ENCODE measurements at regions of chr6 and their contacts with region 1.

Region 1: DNA sequence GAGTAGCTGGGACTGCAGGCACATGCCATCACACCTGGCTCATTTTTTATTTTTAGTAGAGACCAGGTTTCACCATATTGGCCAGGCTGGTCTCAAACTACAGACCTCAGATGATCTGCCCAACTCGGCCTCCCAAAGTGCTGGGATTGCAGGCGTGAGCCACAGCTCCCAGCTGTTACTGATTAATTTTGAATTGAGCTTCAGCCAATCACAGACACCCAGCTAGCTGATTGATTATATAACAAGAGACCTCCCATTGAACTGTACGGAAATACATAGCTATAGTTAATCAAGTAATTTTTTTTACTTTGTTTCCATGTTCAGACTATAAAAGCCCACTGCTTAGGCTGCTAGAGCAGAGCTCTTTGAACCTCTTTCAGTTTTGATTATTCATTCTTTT is 31.6 kb downstream of the PKIB start:
- DNase-seq: no peak
- ATAC-seq: no peak
- H3K4me3 ChIP-seq: no peak overlapping the region
- H3K27ac ChIP-seq: no peak overlapping the region
- H3K4me1 ChIP-seq: no peaks in the 10 kb centered on the region
- H3K27me3 ChIP-seq: no peaks in the 10 kb centered on the region
- CTCF ChIP-seq: no peak
- EP300 ChIP-seq: no peak
- POLR2A ChIP-seq: no peak
- RAD21 ChIP-seq: no peak

Region 2: GRCh38 chr6:122068291-122068769 is 573.5 kb before region 1 on chr6:
- CTCF ChIA-PET with region 1: no interaction called
- POLR2A ChIA-PET with region 1: no interaction called
- RAD21 ChIA-PET with region 1: no interaction called
- SMC1A ChIA-PET with region 1: no interaction called
- in situ Hi-C with region 1: no loop called
- intact Hi-C with region 1: no loop called
- DNase-seq: no peak
- ATAC-seq: no peak
- H3K4me3 ChIP-seq: no peak overlapping the region
- H3K27ac ChIP-seq: no peak overlapping the region
- H3K4me1 ChIP-seq: no peaks in the 10 kb centered on the region
- H3K27me3 ChIP-seq: no peaks in the 10 kb centered on the region
- CTCF ChIP-seq: no peak
- EP300 ChIP-seq: no peak
- POLR2A ChIP-seq: no peak
- RAD21 ChIP-seq: no peak

Region 3: DNA sequence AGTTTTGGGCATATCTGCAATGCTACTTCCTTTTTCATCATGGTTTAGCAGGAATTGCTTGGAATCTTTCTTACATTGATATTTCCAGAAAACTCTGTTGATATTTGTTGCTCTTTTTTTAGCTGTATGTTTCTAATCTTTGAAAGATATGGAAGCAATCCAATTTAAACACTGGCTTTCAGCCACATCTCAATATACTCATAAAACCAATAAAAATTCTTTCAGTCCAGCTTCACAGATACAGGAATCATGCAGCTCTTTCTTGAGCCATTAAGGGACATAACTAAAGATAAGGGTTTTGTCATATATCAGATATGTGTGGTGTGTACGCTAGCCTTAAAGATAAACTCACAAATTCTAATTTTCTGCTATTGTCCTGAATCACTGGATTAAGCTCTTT is 15.8 kb after region 1 on chr6:
- CTCF ChIA-PET with region 1: interaction called, 5 read pairs
- POLR2A ChIA-PET with region 1: no interaction called
- RAD21 ChIA-PET with region 1: no interaction called
- SMC1A ChIA-PET with region 1: interaction called, 19 read pairs
- in situ Hi-C with region 1: no loop called
- intact Hi-C with region 1: no loop called
- DNase-seq: no peak
- ATAC-seq: no peak
- H3K4me3 ChIP-seq: no peak overlapping the region
- H3K27ac ChIP-seq: no peak overlapping the region
- H3K4me1 ChIP-seq: no peaks in the 10 kb centered on the region
- H3K27me3 ChIP-seq: no peaks in the 10 kb centered on the region
- CTCF ChIP-seq: no peak
- EP300 ChIP-seq: no peak
- POLR2A ChIP-seq: no peak
- RAD21 ChIP-seq: no peak

Region 4: DNA sequence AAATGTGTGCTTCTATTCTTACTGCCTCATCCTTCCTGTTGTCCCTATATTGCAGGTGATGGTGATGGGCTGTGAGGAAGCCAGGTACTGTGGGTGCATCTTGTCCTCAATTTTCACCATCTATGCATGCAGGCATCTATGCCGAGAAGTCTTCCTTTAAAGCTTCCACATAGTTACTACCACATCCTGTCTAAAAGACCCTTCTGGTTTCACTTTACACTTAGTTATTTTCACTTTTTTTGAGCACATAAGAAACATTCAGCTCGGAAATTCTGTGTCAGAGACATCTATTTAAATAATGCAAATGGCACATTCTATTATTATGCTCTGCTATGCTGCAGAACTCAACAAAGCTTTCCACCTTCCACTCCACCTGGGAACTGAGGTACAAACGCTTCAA is 109.5 kb after region 1 on chr6:
- CTCF ChIA-PET with region 1: no interaction called
- POLR2A ChIA-PET with region 1: no interaction called
- RAD21 ChIA-PET with region 1: no interaction called
- SMC1A ChIA-PET with region 1: no interaction called
- in situ Hi-C with region 1: no loop called
- intact Hi-C with region 1: no loop called
- DNase-seq: no peak
- ATAC-seq: peak; percentile 75
- H3K4me3 ChIP-seq: no peak overlapping the region
- H3K27ac ChIP-seq: no peak overlapping the region
- H3K4me1 ChIP-seq: 0 out of 2 replicates have a peak, but pooled peaks cover 3% of the 10 kb centered on the region
- H3K27me3 ChIP-seq: no peaks in the 10 kb centered on the region
- CTCF ChIP-seq: no peak
- EP300 ChIP-seq: no peak
- POLR2A ChIP-seq: no peak
- RAD21 ChIP-seq: no peak

Region 5: GRCh38 chr6:122825158-122825557 is 183.3 kb after region 1 on chr6:
- CTCF ChIA-PET with region 1: no interaction called
- POLR2A ChIA-PET with region 1: no interaction called
- RAD21 ChIA-PET with region 1: no interaction called
- SMC1A ChIA-PET with region 1: no interaction called
- in situ Hi-C with region 1: no loop called
- intact Hi-C with region 1: no loop called
- DNase-seq: no peak
- ATAC-seq: no peak
- H3K4me3 ChIP-seq: no peak overlapping the region
- H3K27ac ChIP-seq: no peak overlapping the region
- H3K4me1 ChIP-seq: no peaks in the 10 kb centered on the region
- H3K27me3 ChIP-seq: no peaks in the 10 kb centered on the region; a peak in 1 of 4 replicates
- CTCF ChIP-seq: no peak
- EP300 ChIP-seq: no peak
- POLR2A ChIP-seq: no peak
- RAD21 ChIP-seq: no peak

Measured in GM12878 (cell line).